ENCODE measurements at regions of chr2 and their contacts with region 1.

Region 1: GRCh38 chr2:64873472-64873924 is 115.7 kb upstream of the SLC1A4 start:
- DNase-seq: peak; percentile 86
- ATAC-seq: peak; percentile 82

Region 2: DNA sequence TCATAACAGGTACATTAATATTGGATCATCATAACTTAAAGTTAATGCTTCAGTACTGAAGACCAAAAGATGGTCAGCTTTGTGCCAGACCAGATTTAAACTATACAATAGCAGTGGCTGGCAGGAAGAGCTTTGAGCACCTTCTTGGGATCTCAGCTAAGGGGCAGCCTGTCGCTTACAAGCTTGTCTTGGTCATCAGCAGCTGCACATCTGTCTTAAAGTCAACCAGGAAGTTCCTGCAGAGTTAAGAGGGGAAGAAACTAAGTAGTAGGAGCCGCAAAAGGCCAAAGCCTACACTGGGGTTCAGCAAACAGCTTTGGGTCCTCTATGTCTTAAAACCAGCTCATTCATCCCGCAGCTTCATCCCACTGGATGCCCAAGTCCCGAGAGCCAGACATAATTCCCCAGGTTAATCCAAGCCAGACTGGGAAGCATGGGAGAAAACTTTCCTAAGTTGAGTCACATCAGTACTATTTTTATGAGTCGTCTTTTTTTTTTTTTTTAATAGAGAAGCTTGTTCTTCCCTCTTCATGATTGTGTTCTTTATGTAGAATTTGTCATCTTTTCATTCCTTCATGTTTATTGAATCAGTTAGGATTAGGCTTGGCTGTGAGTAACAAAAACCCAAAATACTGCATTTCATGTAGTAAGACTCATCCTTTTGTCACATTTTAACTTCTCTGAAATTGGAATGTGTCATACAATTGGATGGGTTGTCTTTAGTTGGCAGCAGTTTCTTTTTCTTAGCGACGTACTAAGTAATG is 279.1 kb before region 1 on chr2:
- intact Hi-C with region 1: loop called (anchors 5 kb)
- DNase-seq: no peak
- ATAC-seq: no peak

Region 3: GRCh38 chr2:64644177-64645004 is 229.1 kb before region 1 on chr2:
- intact Hi-C with region 1: loop called (anchors 5 kb)
- DNase-seq: peak; percentile 85
- ATAC-seq: peak; percentile 91

Measured in left ventricle myocardium superior (tissue), 1 donor.